Activated CD4-positive, alpha-beta memory T cell treated with anti-CD3 and anti-CD28 coated beads for 36 hours (primary cell): ENCODE measurements at regions of chr7 and their contacts with region 1.

Region 1: DNA sequence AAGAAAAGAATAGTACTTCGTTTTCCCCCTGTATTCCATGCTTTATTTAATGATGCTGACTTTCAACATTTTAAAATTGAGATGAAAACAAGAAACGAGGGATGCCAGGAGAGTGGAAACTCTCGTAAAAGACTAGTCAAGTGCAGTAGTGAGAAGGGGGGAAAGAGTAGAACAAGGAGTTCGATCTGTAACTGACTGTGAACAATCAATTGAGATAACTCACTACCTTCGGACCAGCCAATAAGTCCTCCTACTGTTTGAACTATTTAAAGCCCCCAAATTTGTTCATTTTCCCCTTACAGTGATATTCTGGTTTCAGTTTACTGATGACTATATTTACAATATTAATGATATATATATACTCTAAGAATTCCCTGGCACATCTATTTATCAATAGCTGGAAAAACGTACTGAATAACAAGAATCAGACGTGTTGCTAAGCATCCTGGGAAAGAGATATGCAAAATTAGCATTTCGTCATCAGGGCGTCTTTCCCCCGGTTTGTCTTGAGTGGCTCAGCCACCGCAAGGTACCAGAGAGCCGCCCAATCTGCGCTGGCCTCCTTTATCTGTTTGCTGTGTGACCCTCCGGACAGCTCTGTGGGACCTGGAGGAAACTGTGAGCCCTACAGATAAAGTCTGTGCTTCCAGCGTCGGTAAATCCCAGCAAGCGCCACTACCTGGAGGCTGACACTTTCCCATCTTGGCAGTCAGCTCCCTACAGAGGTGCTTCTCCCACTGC is 41.1 kb downstream of the PDIA4 start:
- DNase-seq: peak; percentile 87
- H3K4me3 Mint-ChIP-seq: peak overlapping the region; percentile 95
- H3K27ac Mint-ChIP-seq: peak overlapping the region; percentile 92
- H3K4me1 Mint-ChIP-seq: peaks cover 40% of the 10 kb centered on the region
- H3K27me3 Mint-ChIP-seq: peaks cover 2% of the 10 kb centered on the region

Region 2: GRCh38 chr7:148884299-148885022 is 102.7 kb before region 1 on chr7:
- CTCF ChIA-PET with region 1: no interaction called
- POLR2A ChIA-PET with region 1: no interaction called
- intact Hi-C with region 1: loop called (anchors 1 kb)
- DNase-seq: peak; percentile 96
- H3K4me3 Mint-ChIP-seq: peak overlapping the region; percentile 92
- H3K27ac Mint-ChIP-seq: peak overlapping the region; percentile 98
- H3K4me1 Mint-ChIP-seq: peaks cover 31% of the 10 kb centered on the region
- H3K27me3 Mint-ChIP-seq: no peaks in the 10 kb centered on the region

Region 3: GRCh38 chr7:148940702-148941597 is 46.2 kb before region 1 on chr7:
- CTCF ChIA-PET with region 1: interaction called, 3 read pairs
- POLR2A ChIA-PET with region 1: interaction called, 4 read pairs
- intact Hi-C with region 1: loop called (anchors 1 kb)
- DNase-seq: peak; percentile 70
- H3K4me3 Mint-ChIP-seq: peak overlapping the region; percentile 94
- H3K27ac Mint-ChIP-seq: peak overlapping the region; percentile 94
- H3K4me1 Mint-ChIP-seq: peaks cover 14% of the 10 kb centered on the region
- H3K27me3 Mint-ChIP-seq: no peaks in the 10 kb centered on the region

Region 4: DNA sequence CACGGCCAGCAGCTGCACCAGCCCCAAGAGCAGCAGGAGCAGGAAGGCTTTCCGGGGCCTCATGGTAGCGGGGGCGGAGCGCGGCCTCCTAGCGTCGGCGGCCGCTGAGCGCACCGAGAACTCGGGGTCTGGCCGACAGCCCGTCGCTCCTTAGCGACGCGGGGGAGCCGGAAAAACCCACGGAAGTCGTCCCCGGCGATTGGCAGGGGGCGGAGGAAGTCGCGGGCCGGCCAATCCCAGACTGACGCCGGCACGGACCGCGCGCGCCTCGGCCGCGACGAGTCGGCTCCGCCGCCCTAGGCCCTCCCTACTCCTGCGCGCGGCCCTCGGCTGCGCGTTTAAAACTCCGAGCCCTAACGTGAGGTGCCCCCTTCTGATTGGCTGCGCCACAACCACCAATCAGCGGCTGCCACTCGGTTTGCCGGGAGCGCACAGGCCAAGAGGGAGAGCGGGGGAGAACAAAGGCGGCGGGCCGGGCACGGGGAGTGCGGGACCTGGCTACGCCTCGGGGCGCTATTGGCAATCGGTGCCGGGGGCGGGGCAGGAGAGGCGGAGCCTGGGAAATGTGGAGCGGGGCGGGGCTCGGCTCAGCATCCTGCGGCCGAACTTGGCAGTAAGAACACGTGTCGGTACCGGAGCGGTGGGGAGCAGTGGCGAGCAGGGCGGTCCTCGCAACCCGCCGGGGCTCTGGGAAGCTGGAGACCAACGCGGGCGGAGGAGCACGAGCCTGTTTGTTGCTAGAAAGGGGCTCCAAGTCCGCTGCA is 41.3 kb after region 1 on chr7 and contains the start of gene PDIA4:
- CTCF ChIA-PET with region 1: no interaction called
- POLR2A ChIA-PET with region 1: interaction called, 3 read pairs
- intact Hi-C with region 1: loop called (anchors 1 kb)
- DNase-seq: peak; percentile 100
- H3K4me3 Mint-ChIP-seq: peak within 1 kb of the TSS; percentile 96
- H3K27ac Mint-ChIP-seq: peak within 1 kb of the TSS; percentile 88
- H3K4me1 Mint-ChIP-seq: peaks cover 33% of the 10 kb centered on the region
- H3K27me3 Mint-ChIP-seq: no peaks in the 10 kb centered on the region
- total RNA-seq, gene PDIA4: 108 to 112 TPM

Region 5: DNA sequence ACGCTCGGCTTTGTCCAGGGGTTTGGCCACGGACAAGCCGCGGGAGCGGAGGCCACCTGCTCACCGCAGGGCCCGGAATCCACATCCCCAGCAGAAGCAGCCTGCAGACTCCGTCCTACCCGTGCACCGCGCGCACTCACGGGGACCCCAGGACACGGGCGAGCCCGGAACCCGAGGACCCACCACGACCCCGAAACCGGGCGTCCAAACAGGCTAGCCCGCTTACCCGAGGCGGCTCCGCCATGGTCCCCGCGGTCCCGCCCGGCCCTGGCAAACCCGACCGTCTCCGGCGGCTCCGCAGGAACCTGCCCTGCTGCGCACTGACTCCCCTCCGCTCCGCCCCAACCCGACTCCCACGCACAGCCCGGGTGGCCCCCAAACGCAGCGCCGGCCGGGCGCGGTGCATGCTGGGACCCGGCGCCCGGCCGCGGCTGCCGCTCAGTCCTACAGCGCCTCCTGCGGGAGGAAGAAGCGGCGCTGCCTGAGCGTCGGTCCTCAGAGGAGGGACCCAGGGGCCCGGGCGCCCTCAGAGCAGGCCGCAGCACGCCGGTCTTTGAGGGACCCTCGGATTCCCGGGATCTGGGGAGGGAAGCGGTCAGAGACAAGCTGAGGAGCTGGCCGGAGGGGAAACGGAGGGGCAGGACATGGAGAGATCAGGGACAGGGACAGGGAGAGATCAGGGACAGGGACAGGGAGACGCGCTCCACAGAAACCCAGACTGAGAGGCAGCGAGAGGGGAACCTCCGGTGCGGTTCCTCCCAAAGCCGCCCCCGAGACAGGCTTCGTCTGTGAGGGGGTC is 103.4 kb after region 1 on chr7 and contains the start of gene ZNF786:
- CTCF ChIA-PET with region 1: interaction called, 3 read pairs
- POLR2A ChIA-PET with region 1: no interaction called
- intact Hi-C with region 1: loop called (anchors 1 kb)
- DNase-seq: peak; percentile 96
- H3K4me3 Mint-ChIP-seq: peak within 1 kb of the TSS; percentile 96
- H3K27ac Mint-ChIP-seq: peak within 1 kb of the TSS; percentile 99
- H3K4me1 Mint-ChIP-seq: peaks cover 21% of the 10 kb centered on the region
- H3K27me3 Mint-ChIP-seq: no peaks in the 10 kb centered on the region
- total RNA-seq, gene ZNF786: 4.5 to 6.1 TPM